ENCODE measurements at regions of chr21 and their contacts with region 1.

Region 1: DNA sequence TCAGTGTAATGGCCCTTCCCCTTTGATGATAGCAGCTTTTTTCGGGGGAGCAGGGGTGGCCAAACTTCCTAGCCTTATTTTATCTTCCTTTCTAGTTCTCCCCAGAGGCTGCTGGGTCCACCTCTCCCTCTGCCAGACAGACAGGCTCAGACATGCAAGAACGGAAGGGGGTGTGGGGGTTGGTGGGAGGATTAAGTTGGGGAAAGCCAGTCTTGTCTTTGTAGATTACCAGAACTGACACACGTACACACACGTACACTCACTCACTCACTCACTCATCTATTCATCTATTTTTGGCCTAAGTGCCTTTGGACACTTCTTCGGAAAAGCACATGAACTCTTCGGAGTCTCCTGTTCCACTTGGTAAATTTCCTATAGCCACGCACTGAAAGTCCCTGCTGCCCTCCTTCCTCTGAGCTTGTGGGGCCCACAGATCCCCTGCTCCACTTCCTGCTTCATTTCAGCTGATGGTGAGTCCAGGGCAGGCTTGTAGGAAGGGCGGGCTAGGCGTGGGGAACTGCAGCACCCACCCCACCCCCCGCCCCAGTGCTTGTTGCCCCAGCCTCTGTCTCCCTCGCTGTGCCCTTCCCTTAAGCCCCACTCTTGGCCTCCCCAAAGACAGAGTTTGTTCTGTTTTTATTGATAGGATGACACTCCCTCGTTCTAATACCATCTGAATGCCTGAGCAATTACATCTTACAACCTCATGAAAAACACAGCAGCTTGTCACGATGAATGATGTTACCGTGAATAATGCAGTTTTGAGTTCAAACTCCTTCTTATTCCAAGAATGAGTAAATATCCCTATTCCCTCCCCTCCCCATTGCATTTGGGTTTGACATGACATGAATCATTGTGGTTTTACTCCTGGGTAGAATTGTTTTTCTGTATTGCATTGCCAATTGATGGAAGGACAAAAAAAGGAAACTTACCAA is 60.7 kb upstream of the ATP5PO start:
- DNase-seq: peak; percentile 83
- H3K4me3 Mint-ChIP-seq: peak overlapping the region; percentile 70
- H3K27ac Mint-ChIP-seq: peak overlapping the region; percentile 99
- H3K4me1 Mint-ChIP-seq: peaks cover 52% of the 10 kb centered on the region
- H3K27me3 Mint-ChIP-seq: no peaks in the 10 kb centered on the region

Region 2: GRCh38 chr21:33817663-33818451 is 158.5 kb before region 1 on chr21:
- CTCF ChIA-PET with region 1: no interaction called
- intact Hi-C with region 1: no loop called
- DNase-seq: no peak
- H3K4me3 Mint-ChIP-seq: no peak overlapping the region
- H3K27ac Mint-ChIP-seq: no peak overlapping the region
- H3K4me1 Mint-ChIP-seq: no peaks in the 10 kb centered on the region
- H3K27me3 Mint-ChIP-seq: no peaks in the 10 kb centered on the region

Region 3: DNA sequence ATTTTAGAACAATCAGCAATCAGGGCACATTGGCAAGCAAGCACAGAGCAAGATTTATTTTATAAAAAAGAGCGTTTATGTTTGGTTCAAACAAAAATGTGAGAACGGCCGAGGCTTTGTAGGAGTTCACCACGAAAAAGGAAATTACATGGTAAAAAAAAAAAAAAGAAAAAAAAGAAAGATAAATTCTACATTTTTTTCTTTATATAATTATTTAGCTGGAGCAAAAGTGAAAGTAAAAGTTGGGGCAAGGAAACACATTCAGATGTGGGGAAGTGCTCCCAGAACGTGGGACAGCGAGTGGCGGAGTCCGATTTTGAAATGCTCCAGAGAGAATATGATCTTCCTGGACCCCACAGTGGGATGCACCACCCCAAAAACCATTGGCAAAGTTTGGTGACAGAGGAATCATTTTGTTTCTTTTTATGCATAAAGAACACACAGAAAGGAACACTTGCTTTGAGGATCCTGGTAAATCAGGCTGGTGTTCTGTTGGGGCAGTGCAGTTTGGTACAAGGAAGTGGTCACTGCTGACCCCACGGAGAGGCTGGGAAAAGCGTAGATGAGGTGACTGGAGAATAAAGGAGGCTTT is 44.5 kb before region 1 on chr21:
- CTCF ChIA-PET with region 1: interaction called, 5 read pairs
- intact Hi-C with region 1: loop called (anchors 1 kb)
- DNase-seq: no peak
- H3K4me3 Mint-ChIP-seq: peak overlapping the region; percentile 93
- H3K27ac Mint-ChIP-seq: peak overlapping the region; percentile 99
- H3K4me1 Mint-ChIP-seq: peaks cover 43% of the 10 kb centered on the region
- H3K27me3 Mint-ChIP-seq: no peaks in the 10 kb centered on the region

Region 4: DNA sequence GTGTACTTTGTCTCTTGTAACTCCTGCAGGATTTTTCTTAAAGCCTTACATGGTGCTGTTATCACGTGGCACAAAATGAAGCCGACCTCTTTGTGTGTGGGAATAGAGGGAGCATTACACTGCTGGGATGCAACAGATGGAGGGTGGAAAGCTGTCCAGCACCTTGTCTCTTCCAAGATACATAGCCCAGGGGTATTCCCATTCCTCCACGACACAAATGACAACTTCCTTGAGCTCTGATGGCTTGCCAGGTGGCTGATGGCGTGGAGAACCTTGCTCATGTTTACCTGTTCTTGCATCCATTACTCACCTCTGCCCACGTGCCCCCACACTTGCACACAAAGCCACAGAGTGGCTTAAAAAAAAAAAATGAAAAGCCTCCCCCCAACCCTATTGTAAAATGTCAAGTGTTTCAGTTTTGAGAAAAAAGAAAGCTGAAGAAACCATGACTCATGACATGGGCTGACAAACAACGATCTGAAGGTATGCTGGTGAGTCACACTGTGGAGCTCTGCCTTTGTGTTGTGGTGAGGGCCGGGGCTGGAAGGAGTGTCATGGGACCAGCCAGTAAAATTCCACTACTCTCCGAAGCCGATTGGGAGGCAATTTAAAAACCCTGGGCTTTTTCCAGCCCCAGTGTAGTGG is 28.8 kb before region 1 on chr21:
- CTCF ChIA-PET with region 1: interaction called, 5 read pairs
- intact Hi-C with region 1: loop called (anchors 1 kb)
- DNase-seq: peak; percentile 92
- H3K4me3 Mint-ChIP-seq: peak overlapping the region; percentile 65
- H3K27ac Mint-ChIP-seq: peak overlapping the region; percentile 97
- H3K4me1 Mint-ChIP-seq: peaks cover 77% of the 10 kb centered on the region
- H3K27me3 Mint-ChIP-seq: peaks cover 2% of the 10 kb centered on the region

Region 5: DNA sequence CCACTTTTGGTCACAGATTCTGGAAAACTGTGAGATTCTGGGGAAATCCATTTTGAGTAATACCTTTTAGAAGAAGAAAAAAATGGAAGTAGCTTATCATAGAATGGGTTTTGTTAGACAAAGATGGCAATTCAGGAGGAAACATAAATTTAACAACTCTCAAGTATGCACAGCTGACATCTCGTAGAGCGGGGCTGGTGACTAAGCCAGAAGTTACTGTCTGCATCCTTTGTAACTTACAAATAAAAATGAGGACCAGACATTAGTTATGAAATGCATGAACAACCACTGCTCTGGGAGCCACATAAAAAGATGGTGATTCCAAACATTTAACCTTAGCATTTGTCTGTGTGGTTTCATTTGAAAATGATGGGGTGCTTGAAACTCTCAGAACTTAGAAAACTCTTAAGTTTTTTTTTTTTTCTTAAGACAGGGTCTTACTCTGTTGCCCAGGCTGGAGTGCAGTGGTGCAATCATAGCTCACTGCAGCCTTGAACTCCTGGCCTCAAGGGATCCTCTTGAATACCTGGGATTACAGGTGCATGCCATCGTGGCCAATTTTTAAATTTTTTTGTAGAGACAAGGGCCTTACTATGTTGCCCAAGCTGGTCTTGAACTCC is 11.5 kb before region 1 on chr21:
- CTCF ChIA-PET with region 1: no interaction called
- intact Hi-C with region 1: no loop called
- DNase-seq: no peak
- H3K4me3 Mint-ChIP-seq: no peak overlapping the region
- H3K27ac Mint-ChIP-seq: no peak overlapping the region
- H3K4me1 Mint-ChIP-seq: peaks cover 3% of the 10 kb centered on the region
- H3K27me3 Mint-ChIP-seq: no peaks in the 10 kb centered on the region

Region 6: GRCh38 chr21:34042735-34043134 is 66.4 kb after region 1 on chr21:
- CTCF ChIA-PET with region 1: no interaction called
- intact Hi-C with region 1: loop called (anchors 2 kb)
- DNase-seq: no peak
- H3K4me3 Mint-ChIP-seq: no peak overlapping the region
- H3K27ac Mint-ChIP-seq: no peak overlapping the region
- H3K4me1 Mint-ChIP-seq: peaks cover 13% of the 10 kb centered on the region
- H3K27me3 Mint-ChIP-seq: no peaks in the 10 kb centered on the region

Region 7: GRCh38 chr21:34202553-34203372 is 226.4 kb after region 1 on chr21:
- CTCF ChIA-PET with region 1: no interaction called
- intact Hi-C with region 1: loop called (anchors 2 kb)
- DNase-seq: no peak
- H3K4me3 Mint-ChIP-seq: peak overlapping the region; percentile 61
- H3K27ac Mint-ChIP-seq: no peak overlapping the region
- H3K4me1 Mint-ChIP-seq: peaks cover 43% of the 10 kb centered on the region
- H3K27me3 Mint-ChIP-seq: no peaks in the 10 kb centered on the region

Measured in activated naive CD4-positive, alpha-beta T cell treated with anti-CD3 and anti-CD28 coated beads for 36 hours (primary cell).